ENCODE measurements at regions of chr10 and their contacts with region 1.

Region 1: GRCh38 chr10:68331455-68332258 is at the start of gene HNRNPH3:
- DNase-seq: peak; percentile 97 to 98 (median 97)
- H3K4me3 ChIP-seq: peak within 1 kb of the TSS; percentile 88 to 98 (median 94)
- H3K4me3 Mint-ChIP-seq: peak within 1 kb of the TSS; percentile 98 to 99
- H3K27ac ChIP-seq: peak within 1 kb of the TSS; percentile 90 to 94
- H3K27ac Mint-ChIP-seq: peak within 1 kb of the TSS; percentile 97 to 100 (median 99)
- H3K4me1 ChIP-seq: peaks cover 60 to 80% of the 10 kb centered on the region in 2 donors
- H3K4me1 Mint-ChIP-seq: peaks cover 57% of the 10 kb centered on the region
- H3K27me3 ChIP-seq: no peaks in the 10 kb centered on the region
- H3K27me3 Mint-ChIP-seq: no peaks in the 10 kb centered on the region
- CTCF ChIP-seq: no peak
- polyA plus RNA-seq, gene HNRNPH3: 36.6 to 86.0 (median 71.6) TPM

Region 2: DNA sequence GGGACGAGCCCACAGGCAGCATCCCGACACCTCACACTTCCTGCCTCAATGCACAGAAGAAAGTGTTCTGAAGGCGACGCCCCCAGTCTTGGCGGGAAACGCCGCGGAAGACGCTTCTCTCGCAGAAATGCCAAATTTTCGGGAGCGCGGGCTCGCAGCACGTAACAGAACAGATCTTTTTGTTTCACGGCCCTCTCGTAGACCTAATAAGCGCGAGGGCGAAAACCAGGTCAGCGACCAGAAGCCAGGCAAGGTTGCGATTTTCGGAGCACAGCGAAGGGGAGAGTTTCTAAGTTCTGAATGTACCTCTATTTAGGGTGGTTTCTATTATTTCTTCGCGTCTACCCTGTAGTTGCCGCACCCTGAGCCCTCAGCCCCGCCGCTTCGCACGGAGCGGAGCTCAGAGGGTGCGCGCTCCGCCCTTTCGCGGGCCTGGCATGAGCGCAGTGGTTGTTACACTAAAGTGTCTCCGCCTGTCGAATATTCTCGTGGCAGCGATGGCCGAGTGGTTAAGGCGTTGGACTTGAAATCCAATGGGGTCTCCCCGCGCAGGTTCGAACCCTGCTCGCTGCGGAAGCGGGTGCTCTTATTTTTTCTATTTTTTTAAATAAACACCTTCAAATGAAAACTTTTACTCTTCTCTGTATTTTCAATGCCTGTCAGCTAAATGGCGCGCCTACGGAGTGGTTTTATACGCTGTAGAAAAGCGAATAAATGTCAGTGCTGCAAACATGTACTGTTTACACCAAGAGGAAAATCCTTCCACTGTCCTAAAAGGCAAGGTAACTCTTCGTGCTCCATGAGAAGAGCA is 567.4 kb before region 1 on chr10:
- intact Hi-C with region 1: loop called in 1 of 2 experiments (anchors 5 kb)
- DNase-seq: peak; percentile 91 to 95 (median 93)
- H3K4me3 ChIP-seq: peak overlapping the region; percentile 81 to 99 (median 93)
- H3K4me3 Mint-ChIP-seq: peak overlapping the region; percentile 86 to 91
- H3K27ac ChIP-seq: peak overlapping the region; percentile 87 to 94
- H3K27ac Mint-ChIP-seq: peak overlapping the region; percentile 84 to 96 (median 92)
- H3K4me1 ChIP-seq: peaks cover 29 to 37% of the 10 kb centered on the region in 2 donors
- H3K4me1 Mint-ChIP-seq: peaks cover 24% of the 10 kb centered on the region
- H3K27me3 ChIP-seq: no peaks in the 10 kb centered on the region
- H3K27me3 Mint-ChIP-seq: peaks cover 0 to 2% (median 1%) of the 10 kb centered on the region in 3 donors
- CTCF ChIP-seq: no peak

Region 3: DNA sequence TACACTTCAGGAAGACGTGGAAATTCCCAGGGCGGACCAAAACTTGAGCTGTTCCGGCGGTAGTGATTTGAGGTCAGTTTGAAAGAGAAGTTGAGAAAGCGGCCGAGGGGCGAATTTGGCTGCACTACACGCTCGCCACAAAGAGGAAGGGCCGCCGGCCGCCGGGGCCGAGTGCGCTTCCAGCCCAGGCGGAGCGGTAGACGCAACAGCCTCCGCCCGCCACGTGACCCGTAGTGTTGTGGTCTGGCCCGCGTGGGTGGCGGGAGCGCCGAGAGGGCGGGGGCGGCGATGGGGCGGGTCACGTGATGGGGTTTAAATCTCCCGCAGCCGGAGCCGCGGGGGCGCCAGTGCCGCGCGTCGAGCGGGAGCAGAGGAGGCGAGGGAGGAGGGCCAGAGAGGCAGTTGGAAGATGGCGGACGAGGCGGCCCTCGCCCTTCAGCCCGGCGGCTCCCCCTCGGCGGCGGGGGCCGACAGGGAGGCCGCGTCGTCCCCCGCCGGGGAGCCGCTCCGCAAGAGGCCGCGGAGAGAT is 447.3 kb before region 1 on chr10 and contains the start of gene SIRT1:
- intact Hi-C with region 1: loop called in 1 of 2 experiments (anchors 10 kb)
- DNase-seq: peak; percentile 96 to 97 (median 97)
- H3K4me3 ChIP-seq: peak within 1 kb of the TSS; percentile 59 to 89 (median 69)
- H3K4me3 Mint-ChIP-seq: peak within 1 kb of the TSS; percentile 89 to 94
- H3K27ac ChIP-seq: peak within 1 kb of the TSS; percentile 73 to 87
- H3K27ac Mint-ChIP-seq: peak within 1 kb of the TSS; percentile 93 to 97 (median 96)
- H3K4me1 ChIP-seq: peaks cover 24 to 32% of the 10 kb centered on the region in 2 donors
- H3K4me1 Mint-ChIP-seq: peaks cover 30% of the 10 kb centered on the region
- H3K27me3 ChIP-seq: no peaks in the 10 kb centered on the region
- H3K27me3 Mint-ChIP-seq: peaks cover 0 to 4% (median 2%) of the 10 kb centered on the region in 3 donors
- CTCF ChIP-seq: no peak
- polyA plus RNA-seq, gene SIRT1: 4.4 to 8.4 (median 8.3) TPM

Region 4: GRCh38 chr10:67978749-67979148 is 352.9 kb before region 1 on chr10:
- intact Hi-C with region 1: no loop called
- DNase-seq: no peak
- H3K4me3 ChIP-seq: no peak overlapping the region
- H3K4me3 Mint-ChIP-seq: no peak overlapping the region
- H3K27ac ChIP-seq: no peak overlapping the region
- H3K27ac Mint-ChIP-seq: peak overlapping the region in 2 of 7 donors; percentile 2 to 31
- H3K4me1 ChIP-seq: no peaks in the 10 kb centered on the region
- H3K4me1 Mint-ChIP-seq: no peaks in the 10 kb centered on the region
- H3K27me3 ChIP-seq: no peaks in the 10 kb centered on the region
- H3K27me3 Mint-ChIP-seq: no peaks in the 10 kb centered on the region
- CTCF ChIP-seq: no peak

Region 5: GRCh38 chr10:68074775-68075549 is 256.7 kb before region 1 on chr10 and contains the start of gene HERC4:
- intact Hi-C with region 1: loop called (anchors 5 kb)
- DNase-seq: peak; percentile 87 to 95 (median 94)
- H3K4me3 ChIP-seq: peak within 1 kb of the TSS; percentile 68 to 100 (median 92)
- H3K4me3 Mint-ChIP-seq: peak within 1 kb of the TSS; percentile 97
- H3K27ac ChIP-seq: peak within 1 kb of the TSS; percentile 96 to 100
- H3K27ac Mint-ChIP-seq: peak within 1 kb of the TSS; percentile 92 to 97 (median 95)
- H3K4me1 ChIP-seq: peaks cover 15 to 31% of the 10 kb centered on the region in 2 donors
- H3K4me1 Mint-ChIP-seq: peaks cover 30% of the 10 kb centered on the region
- H3K27me3 ChIP-seq: no peaks in the 10 kb centered on the region
- H3K27me3 Mint-ChIP-seq: no peaks in the 10 kb centered on the region
- CTCF ChIP-seq: no peak
- polyA plus RNA-seq, gene HERC4: 10.7 to 17.5 (median 14.3) TPM

Measured in CD14-positive monocyte (primary cell).